GM12878 (cell line): ENCODE measurements at regions of chr15 and their contacts with region 1.

Region 1: GRCh38 chr15:88894348-88894818 is 961 bp downstream of the HAPLN3 start:
- DNase-seq: no peak
- ATAC-seq: peak; percentile 75
- H3K4me3 ChIP-seq: peak overlapping the region; percentile 38; the same call in 1 of the 2 replicates
- H3K27ac ChIP-seq: no peak overlapping the region
- H3K4me1 ChIP-seq: peaks cover 3% of the 10 kb centered on the region
- H3K27me3 ChIP-seq: peaks cover 0 to 5% of the 10 kb centered on the region in 2 experiments; a peak in 2 of 4 replicates
- CTCF ChIP-seq: peak; percentile 73 to 92 (median 82)
- EP300 ChIP-seq: no peak
- POLR2A ChIP-seq: no peak
- RAD21 ChIP-seq: peak; percentile 48

Region 2: DNA sequence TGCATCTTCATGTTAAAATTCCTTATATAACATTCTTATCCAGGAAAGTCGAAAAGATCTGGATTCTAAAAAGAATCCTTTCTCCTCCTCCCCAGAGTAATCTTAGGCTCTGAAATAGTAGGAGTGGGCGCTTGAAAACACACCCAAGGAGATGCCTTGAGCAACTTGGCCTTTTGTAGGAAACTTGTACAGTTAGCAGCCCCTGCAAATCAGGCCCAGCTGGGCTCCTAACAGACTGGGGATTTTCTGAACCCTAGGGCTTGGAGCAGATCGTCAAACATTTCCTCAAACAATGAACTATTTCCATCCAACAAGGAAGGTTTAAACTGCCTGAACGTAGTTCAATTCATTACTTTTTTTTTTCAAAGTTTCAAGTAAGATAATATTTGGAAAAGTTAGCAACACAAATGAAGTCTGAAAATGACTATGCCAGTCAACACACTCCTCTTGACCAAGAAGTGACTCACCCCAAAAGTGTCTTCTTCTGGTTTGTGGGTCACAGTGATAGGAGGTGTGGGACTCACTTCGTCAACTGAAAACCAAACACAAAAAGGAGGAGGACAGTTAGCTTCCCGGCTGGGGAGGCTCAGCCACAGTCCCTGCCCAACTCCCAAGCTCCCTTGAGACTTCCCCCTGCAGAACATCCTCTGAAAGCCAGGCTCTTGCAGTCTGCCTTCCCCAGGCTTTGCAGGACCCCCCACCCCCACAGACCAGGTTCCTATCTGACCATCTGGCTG is 767.5 kb before region 1 on chr15:
- CTCF ChIA-PET with region 1: no interaction called
- POLR2A ChIA-PET with region 1: no interaction called
- RAD21 ChIA-PET with region 1: no interaction called
- SMC1A ChIA-PET with region 1: no interaction called
- in situ Hi-C with region 1: no loop called
- intact Hi-C with region 1: no loop called
- DNase-seq: no peak
- ATAC-seq: no peak
- H3K4me3 ChIP-seq: no peak overlapping the region
- H3K27ac ChIP-seq: no peak overlapping the region
- H3K4me1 ChIP-seq: no peaks in the 10 kb centered on the region
- H3K27me3 ChIP-seq: no peaks in the 10 kb centered on the region
- CTCF ChIP-seq: no peak
- EP300 ChIP-seq: no peak
- POLR2A ChIP-seq: no peak
- RAD21 ChIP-seq: no peak

Region 3: GRCh38 chr15:88878720-88879184 is 15.6 kb before region 1 on chr15:
- CTCF ChIA-PET with region 1: interaction called, 10 read pairs
- POLR2A ChIA-PET with region 1: no interaction called
- RAD21 ChIA-PET with region 1: interaction called, 3 read pairs
- SMC1A ChIA-PET with region 1: no interaction called
- in situ Hi-C with region 1: no loop called
- intact Hi-C with region 1: no loop called
- DNase-seq: no peak
- ATAC-seq: peak; percentile 98
- H3K4me3 ChIP-seq: no peak overlapping the region
- H3K27ac ChIP-seq: no peak overlapping the region
- H3K4me1 ChIP-seq: no peaks in the 10 kb centered on the region
- H3K27me3 ChIP-seq: no peaks in the 10 kb centered on the region
- CTCF ChIP-seq: peak; percentile 69 to 83 (median 73)
- EP300 ChIP-seq: no peak
- POLR2A ChIP-seq: no peak
- RAD21 ChIP-seq: peak; percentile 36